Mammary epithelial cell (primary cell): ENCODE measurements at regions of chr14 and their contacts with region 1.

Region 1: DNA sequence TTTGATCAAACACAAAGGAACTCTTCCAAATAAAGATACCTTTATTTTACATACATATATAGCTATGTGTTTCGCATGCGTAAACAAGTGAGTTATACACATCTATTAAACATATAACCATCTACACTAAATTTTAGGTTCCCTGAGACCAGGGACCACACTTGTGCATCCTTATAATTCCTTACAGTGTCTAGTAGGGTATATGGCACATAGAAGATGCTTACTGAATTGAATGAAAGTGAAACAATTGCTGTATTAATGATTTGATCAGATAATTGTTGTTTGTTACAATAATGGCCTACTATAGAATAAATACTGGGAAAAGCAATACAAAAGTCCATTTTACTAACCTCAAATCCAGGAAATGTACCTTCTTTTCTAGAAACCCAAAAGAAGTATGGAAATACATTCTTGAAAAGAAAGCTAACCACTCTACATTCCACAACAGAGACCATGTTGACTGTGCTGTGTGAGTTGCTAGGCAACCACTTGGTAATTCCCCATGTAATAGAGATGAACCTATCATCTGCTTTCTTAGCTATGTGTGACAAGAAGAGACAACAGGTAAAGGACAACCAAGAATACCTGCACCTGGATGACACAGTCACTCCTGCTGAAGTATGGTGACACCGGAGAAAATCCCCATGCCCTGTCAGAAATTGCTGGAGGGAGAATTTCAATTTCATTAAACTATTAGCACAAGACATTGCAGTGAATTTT is 11.9 kb upstream of the CIPC start:
- DNase-seq: peak; percentile 76
- H3K4me3 ChIP-seq: no peak overlapping the region
- H3K27ac ChIP-seq: peak overlapping the region; percentile 21
- H3K4me1 ChIP-seq: peaks cover 23% of the 10 kb centered on the region
- H3K27me3 ChIP-seq: no peaks in the 10 kb centered on the region
- CTCF ChIP-seq: no peak

Region 2: GRCh38 chr14:76715511-76716081 is 370.6 kb before region 1 on chr14:
- CTCF ChIA-PET with region 1: no interaction called
- dilution Hi-C with region 1: loop called (anchors 5 kb)
- in situ Hi-C with region 1: loop called (anchors 25 kb)
- intact Hi-C with region 1: no loop called
- DNase-seq: no peak
- H3K4me3 ChIP-seq: no peak overlapping the region
- H3K27ac ChIP-seq: no peak overlapping the region
- H3K4me1 ChIP-seq: no peaks in the 10 kb centered on the region
- H3K27me3 ChIP-seq: no peaks in the 10 kb centered on the region
- CTCF ChIP-seq: no peak